ENCODE measurements at regions of chr15 and their contacts with region 1.

Region 1: DNA sequence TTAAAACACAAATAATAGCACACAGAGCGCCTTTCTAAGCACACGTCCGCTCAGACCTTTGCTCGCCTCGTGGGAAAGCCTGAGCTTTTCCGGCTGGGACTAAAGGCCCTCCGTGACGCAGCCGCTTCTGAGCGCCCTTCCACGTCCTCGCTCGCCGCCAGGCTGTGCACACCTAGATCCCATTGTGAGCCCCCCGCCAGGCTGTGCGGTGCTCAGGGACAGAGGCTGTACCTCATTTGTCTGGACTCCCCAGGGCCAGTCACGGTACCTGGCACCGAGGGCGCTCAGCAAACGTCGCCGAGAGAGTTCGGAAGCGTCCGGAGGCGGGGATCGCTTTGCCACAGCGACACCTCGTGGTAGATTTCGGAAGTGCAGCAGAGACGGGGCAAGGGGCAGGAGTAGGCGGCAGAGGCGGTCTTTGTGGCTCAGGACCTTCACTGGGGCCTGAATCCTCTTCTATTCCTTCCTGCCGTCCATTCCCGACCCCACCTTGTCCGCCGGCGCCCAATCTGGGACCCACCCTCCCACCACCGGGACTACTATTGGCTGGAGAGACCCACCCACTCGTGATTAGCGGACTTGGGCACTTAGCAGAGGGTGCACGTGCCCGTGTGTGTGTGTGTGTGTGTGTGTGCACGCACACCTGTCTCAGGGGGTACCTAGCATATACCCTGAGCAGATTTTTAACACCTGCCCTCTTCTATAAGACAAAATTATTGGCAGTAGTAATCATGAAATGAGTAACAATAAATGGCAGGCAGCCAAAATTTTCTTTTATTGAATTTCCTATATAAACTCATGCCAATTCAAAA is 65.6 kb downstream of the RHCG start:
- DNase-seq: peak; percentile 74
- H3K4me3 ChIP-seq: peak overlapping the region in 2 of 3 experiments; percentile 25 to 26
- H3K27ac ChIP-seq: no peak overlapping the region
- H3K4me1 ChIP-seq: peaks cover 3% of the 10 kb centered on the region
- H3K27me3 ChIP-seq: peaks cover 0 to 15% of the 10 kb centered on the region in 2 experiments
- CTCF ChIP-seq: peak; percentile 96 to 99
- POLR2A ChIP-seq: no peak

Region 2: GRCh38 chr15:89075846-89076245 is 354.9 kb before region 1 on chr15:
- CTCF ChIA-PET with region 1: no interaction called
- POLR2A ChIA-PET with region 1: no interaction called
- dilution Hi-C with region 1: no loop called
- intact Hi-C with region 1: no loop called
- DNase-seq: no peak
- H3K4me3 ChIP-seq: no peak overlapping the region
- H3K27ac ChIP-seq: no peak overlapping the region
- H3K4me1 ChIP-seq: no peaks in the 10 kb centered on the region
- H3K27me3 ChIP-seq: no peaks in the 10 kb centered on the region
- CTCF ChIP-seq: no peak
- POLR2A ChIP-seq: no peak

Region 3: GRCh38 chr15:89457097-89457496 is 26.4 kb after region 1 on chr15:
- CTCF ChIA-PET with region 1: no interaction called
- POLR2A ChIA-PET with region 1: no interaction called
- dilution Hi-C with region 1: no loop called
- intact Hi-C with region 1: no loop called
- DNase-seq: no peak
- H3K4me3 ChIP-seq: no peak overlapping the region
- H3K27ac ChIP-seq: no peak overlapping the region
- H3K4me1 ChIP-seq: no peaks in the 10 kb centered on the region
- H3K27me3 ChIP-seq: peaks cover 3 to 9% of the 10 kb centered on the region in 2 experiments
- CTCF ChIP-seq: no peak
- POLR2A ChIP-seq: no peak

Region 4: GRCh38 chr15:89472785-89473256 is 42.1 kb after region 1 on chr15:
- CTCF ChIA-PET with region 1: interaction called, 19 read pairs
- POLR2A ChIA-PET with region 1: no interaction called
- dilution Hi-C with region 1: no loop called
- intact Hi-C with region 1: loop called (anchors 1 kb)
- DNase-seq: peak; percentile 67
- H3K4me3 ChIP-seq: no peak overlapping the region
- H3K27ac ChIP-seq: no peak overlapping the region
- H3K4me1 ChIP-seq: no peaks in the 10 kb centered on the region
- H3K27me3 ChIP-seq: peaks cover 13 to 19% of the 10 kb centered on the region in 2 experiments
- CTCF ChIP-seq: peak; percentile 81 to 93
- POLR2A ChIP-seq: no peak

Measured in endothelial cell of umbilical vein (primary cell).